ENCODE measurements at regions of chr14 and their contacts with region 1.

Region 1: DNA sequence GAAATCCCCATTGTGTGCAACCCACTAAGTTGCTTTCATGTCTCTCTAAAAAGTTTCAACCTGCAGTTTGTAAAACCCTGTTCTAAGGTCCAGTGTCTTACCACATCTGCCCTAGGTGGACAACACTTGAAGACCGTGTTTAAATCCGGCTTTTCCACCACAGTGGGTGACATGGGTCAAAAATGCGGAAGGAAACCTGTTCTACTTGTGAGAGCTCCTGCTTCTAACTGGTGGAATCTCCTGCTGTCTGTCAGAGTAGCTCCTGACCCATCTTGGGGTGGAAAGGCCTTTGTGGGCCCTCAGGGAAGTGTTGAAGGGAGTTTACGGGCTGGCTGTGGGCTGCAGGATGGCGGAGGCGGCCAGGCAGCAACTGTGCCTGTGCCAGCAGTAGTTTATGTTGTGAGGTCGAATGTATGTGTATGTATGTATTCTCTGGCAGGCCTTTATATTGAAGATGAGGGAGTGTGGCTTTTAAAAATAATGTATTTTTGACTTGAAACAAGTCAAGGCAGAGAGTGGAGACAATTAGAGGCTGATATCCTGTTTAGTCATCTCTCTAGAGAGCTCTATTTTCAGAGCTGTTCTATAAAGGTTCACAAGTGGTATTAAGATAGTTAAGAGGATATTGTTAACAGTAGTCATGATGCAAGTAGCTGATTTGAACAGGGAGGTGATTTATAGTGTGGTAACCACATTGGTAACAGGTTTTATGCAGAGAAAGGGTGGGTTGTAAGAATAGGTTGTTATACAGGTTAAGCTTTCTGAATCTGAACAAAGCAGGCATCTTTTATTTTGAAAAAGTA is 67.0 kb downstream of the PRKCH start:
- DNase-seq: peak; percentile 55
- CTCF ChIP-seq: no peak

Region 2: GRCh38 chr14:61401461-61401860 is 13.1 kb after region 1 on chr14:
- CTCF ChIA-PET with region 1: interaction called, 15 read pairs
- POLR2A ChIA-PET with region 1: no interaction called
- DNase-seq: no peak
- CTCF ChIP-seq: no peak

Measured in GM10248 (cell line).